Sciatic nerve (tissue), 2 donors: ENCODE measurements at regions of chr12 and their contacts with region 1.

Region 1: DNA sequence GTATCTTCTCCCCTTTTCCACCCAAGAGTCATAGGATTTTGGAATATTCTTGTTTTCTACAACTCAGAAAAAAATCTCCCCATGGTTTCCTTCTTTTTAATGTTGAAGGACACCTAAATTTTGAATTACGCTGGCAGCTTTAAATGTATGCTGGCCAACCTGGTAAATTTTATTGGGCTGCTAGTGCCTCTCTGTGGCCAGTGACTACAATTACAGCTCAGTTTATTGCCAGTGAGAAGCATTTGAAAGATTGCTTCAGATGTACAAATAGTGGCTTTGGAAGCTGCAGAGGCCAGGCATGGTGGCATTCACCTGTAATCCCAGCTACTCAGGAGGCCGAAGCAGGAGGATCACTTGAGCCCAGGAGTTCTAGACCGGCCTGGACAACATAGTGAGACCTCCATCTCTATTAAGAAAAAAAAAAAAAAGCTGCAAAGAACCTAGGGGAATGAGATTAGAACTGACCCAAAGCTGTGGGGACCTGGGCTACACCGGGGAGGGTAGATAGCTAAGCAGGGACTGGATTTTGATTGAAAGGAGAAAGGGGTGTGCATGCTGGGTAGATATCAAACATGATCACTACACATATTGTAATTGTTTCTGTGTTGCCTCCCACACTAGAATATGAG is 7.6 kb upstream of the RAB21 start:
- DNase-seq: no peak
- ATAC-seq: peak; percentile 86

Region 2: GRCh38 chr12:71426300-71427047 is 320.6 kb before region 1 on chr12:
- intact Hi-C with region 1: loop called (anchors 10 kb)
- DNase-seq: no peak
- ATAC-seq: no peak

Region 3: DNA sequence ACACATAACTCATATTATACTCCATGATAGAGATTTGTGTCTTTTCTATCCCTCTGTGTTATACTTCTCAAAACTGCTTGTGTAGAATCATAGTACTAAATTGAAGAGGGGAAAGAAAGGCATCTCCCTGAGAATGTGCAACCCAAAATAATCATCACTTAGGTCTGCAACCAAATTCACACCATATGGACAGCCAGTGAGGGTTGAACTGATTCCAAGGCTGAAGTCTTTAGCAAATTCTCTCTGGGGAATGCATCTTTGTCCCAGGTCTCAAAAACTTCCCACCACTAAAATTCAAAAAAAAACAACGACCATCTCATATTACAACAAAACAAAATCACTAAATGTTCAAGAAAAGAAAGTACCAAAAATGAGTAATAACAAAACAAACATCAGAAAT is 94.4 kb before region 1 on chr12:
- intact Hi-C with region 1: no loop called
- DNase-seq: no peak
- ATAC-seq: no peak